Activated CD8-positive, alpha-beta T cell treated with anti-CD3 and anti-CD28 coated beads for 36 hours (primary cell): ENCODE measurements at regions of chr22 and their contacts with region 1.

Region 1: DNA sequence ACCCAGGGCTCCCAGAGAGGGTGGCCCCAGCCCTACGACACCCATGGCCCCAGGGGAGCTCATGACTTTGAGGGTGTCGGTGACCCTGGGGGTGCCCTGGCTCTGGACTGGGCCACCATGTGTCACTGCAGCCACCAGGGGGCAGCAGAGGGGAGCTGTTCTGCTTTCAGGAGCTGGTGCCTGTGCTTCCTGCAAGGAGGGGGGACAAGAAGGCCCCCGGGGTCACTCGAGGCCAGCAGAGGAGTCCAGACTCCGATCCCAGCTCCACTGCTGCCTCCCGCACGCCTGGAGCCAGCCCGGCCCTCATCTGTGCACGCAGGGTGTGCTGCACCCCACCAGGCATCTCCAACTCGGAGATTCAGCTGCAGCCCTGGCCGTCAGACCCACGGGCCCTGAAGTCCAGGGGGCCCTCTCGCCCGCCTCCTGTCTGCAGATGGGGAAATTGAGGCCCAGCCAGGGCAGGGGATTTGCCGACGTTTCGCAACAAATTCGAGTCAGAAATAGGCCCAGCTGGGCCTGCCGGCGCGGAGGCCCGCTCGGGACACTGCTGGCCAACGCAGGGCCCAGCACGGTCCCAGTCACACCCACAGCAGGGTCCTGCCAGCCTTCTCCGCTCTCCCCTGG is 29.5 kb upstream of the WNT7B start:
- DNase-seq: peak; percentile 95
- ATAC-seq: peak; percentile 90
- H3K4me3 Mint-ChIP-seq: no peak overlapping the region
- H3K27ac Mint-ChIP-seq: peak overlapping the region; percentile 58
- H3K4me1 Mint-ChIP-seq: peaks cover 28% of the 10 kb centered on the region
- H3K27me3 Mint-ChIP-seq: no peaks in the 10 kb centered on the region
- CTCF ChIP-seq: peak; percentile 95

Region 2: GRCh38 chr22:45994491-45995404 is 11.7 kb before region 1 on chr22:
- CTCF ChIA-PET with region 1: interaction called, 49 read pairs
- POLR2A ChIA-PET with region 1: interaction called, 6 read pairs
- intact Hi-C with region 1: no loop called
- DNase-seq: peak; percentile 83
- ATAC-seq: peak; percentile 81
- H3K4me3 Mint-ChIP-seq: no peak overlapping the region
- H3K27ac Mint-ChIP-seq: no peak overlapping the region
- H3K4me1 Mint-ChIP-seq: no peaks in the 10 kb centered on the region
- H3K27me3 Mint-ChIP-seq: peaks cover 2% of the 10 kb centered on the region
- CTCF ChIP-seq: peak; percentile 96

Region 3: GRCh38 chr22:46035742-46036557 is 29.5 kb after region 1 on chr22:
- CTCF ChIA-PET with region 1: interaction called, 73 read pairs
- POLR2A ChIA-PET with region 1: interaction called, 5 read pairs
- intact Hi-C with region 1: no loop called
- DNase-seq: peak; percentile 100
- ATAC-seq: peak; percentile 96
- H3K4me3 Mint-ChIP-seq: peak overlapping the region; percentile 80
- H3K27ac Mint-ChIP-seq: peak overlapping the region; percentile 91
- H3K4me1 Mint-ChIP-seq: peaks cover 16% of the 10 kb centered on the region
- H3K27me3 Mint-ChIP-seq: no peaks in the 10 kb centered on the region
- CTCF ChIP-seq: no peak

Region 4: GRCh38 chr22:46049726-46050450 is 43.4 kb after region 1 on chr22:
- CTCF ChIA-PET with region 1: interaction called, 21 read pairs
- POLR2A ChIA-PET with region 1: interaction called, 3 read pairs
- intact Hi-C with region 1: no loop called
- DNase-seq: no peak
- ATAC-seq: no peak
- H3K4me3 Mint-ChIP-seq: no peak overlapping the region
- H3K27ac Mint-ChIP-seq: no peak overlapping the region
- H3K4me1 Mint-ChIP-seq: peaks cover 8% of the 10 kb centered on the region
- H3K27me3 Mint-ChIP-seq: no peaks in the 10 kb centered on the region
- CTCF ChIP-seq: no peak

Region 5: GRCh38 chr22:46071451-46072109 is 65.1 kb after region 1 on chr22:
- CTCF ChIA-PET with region 1: interaction called, 21 read pairs
- POLR2A ChIA-PET with region 1: interaction called, 4 read pairs
- intact Hi-C with region 1: no loop called
- DNase-seq: peak; percentile 67
- ATAC-seq: peak; percentile 9
- H3K4me3 Mint-ChIP-seq: peak overlapping the region; percentile 75
- H3K27ac Mint-ChIP-seq: no peak overlapping the region
- H3K4me1 Mint-ChIP-seq: peaks cover 27% of the 10 kb centered on the region
- H3K27me3 Mint-ChIP-seq: peaks cover 6% of the 10 kb centered on the region
- CTCF ChIP-seq: no peak

Region 6: GRCh38 chr22:46116491-46116958 is 110.0 kb after region 1 on chr22:
- CTCF ChIA-PET with region 1: interaction called, 110 read pairs
- POLR2A ChIA-PET with region 1: interaction called, 3 read pairs
- intact Hi-C with region 1: loop called (anchors 5 kb)
- DNase-seq: peak; percentile 90
- ATAC-seq: peak; percentile 95
- H3K4me3 Mint-ChIP-seq: no peak overlapping the region
- H3K27ac Mint-ChIP-seq: no peak overlapping the region
- H3K4me1 Mint-ChIP-seq: no peaks in the 10 kb centered on the region
- H3K27me3 Mint-ChIP-seq: no peaks in the 10 kb centered on the region
- CTCF ChIP-seq: peak; percentile 83

Region 7: GRCh38 chr22:46303347-46303965 is 297.0 kb after region 1 on chr22:
- CTCF ChIA-PET with region 1: interaction called, 10 read pairs
- POLR2A ChIA-PET with region 1: no interaction called
- intact Hi-C with region 1: no loop called
- DNase-seq: no peak
- ATAC-seq: no peak
- H3K4me3 Mint-ChIP-seq: no peak overlapping the region
- H3K27ac Mint-ChIP-seq: no peak overlapping the region
- H3K4me1 Mint-ChIP-seq: peaks cover 15% of the 10 kb centered on the region
- H3K27me3 Mint-ChIP-seq: peaks cover 4% of the 10 kb centered on the region
- CTCF ChIP-seq: no peak